ENCODE measurements at regions of chr5 and their contacts with region 1.

Region 1: GRCh38 chr5:151164686-151165392 is 7.3 kb upstream of the ANXA6 start:
- DNase-seq: peak; percentile 74
- H3K4me3 ChIP-seq: no peak overlapping the region
- H3K27ac ChIP-seq: no peak overlapping the region
- H3K4me1 ChIP-seq: no peaks in the 10 kb centered on the region
- H3K27me3 ChIP-seq: no peaks in the 10 kb centered on the region
- CTCF ChIP-seq: peak; percentile 71 to 91 (median 87)
- POLR2A ChIP-seq: no peak

Region 2: DNA sequence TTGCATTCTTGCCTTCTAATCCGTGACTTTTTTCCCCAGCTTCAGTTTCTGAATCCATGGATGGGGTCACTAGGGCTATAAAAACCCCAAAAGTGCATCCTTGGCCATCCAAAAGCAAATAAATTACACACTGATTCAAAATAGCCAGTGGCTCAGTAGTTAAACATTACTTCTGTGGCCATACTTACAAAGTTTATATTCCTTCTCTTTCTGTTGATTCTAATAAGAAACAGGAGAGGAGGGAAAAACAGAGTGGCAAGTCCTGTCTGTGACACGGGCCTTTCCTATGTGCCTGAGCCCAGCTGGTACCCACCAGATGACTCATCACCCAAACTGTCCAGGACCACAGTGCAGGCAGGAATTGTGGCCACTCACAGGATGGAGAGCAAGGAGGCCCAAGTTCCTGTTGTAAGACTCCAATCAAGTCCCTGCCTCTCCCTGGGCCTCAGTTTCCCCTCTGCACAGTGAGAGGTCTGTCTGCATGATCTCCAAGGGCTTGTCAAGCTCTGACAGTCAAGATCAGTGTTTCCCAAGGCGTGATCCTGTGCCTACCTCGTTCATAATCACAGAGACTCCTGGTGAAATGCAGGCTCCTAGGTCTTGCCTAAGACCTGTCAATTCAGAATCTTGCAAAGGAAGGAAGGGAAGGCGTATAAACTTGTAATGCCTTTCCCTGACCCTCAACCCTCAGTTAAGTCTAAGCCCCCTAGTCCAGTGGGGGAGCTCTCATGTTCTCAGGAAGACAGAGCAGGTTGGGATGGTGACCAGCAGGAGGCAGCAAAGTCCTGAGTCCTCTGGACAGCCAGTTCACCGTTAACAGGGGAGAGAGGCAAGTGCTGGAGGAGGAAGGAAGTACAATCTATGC is 113.5 kb before region 1 on chr5:
- intact Hi-C with region 1: loop called (anchors 5 kb)
- DNase-seq: peak; percentile 68
- H3K4me3 ChIP-seq: no peak overlapping the region
- H3K27ac ChIP-seq: no peak overlapping the region
- H3K4me1 ChIP-seq: no peaks in the 10 kb centered on the region
- H3K27me3 ChIP-seq: no peaks in the 10 kb centered on the region
- CTCF ChIP-seq: peak; percentile 54 to 88 (median 79)
- POLR2A ChIP-seq: no peak

Region 3: DNA sequence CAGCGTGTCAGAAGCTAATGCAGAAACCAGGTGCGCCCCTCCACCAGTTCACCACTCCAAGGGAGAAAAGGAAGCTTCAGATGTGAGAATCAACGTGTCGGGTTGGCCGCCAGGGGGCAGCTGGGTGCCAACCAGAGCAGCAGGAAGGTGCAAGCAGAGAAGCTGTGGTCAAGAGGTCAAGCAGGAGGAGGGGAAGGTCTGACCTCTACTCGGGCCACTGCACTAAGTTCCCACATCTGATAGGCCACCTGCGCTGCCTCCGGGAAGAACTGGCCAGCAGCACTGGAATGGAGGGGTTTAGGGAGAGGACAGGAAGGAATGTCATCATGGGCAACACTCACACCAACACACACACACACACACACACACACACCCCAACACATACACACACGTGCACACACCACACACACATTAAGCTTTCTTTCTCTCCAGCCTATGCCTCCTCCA is 38.6 kb before region 1 on chr5:
- intact Hi-C with region 1: loop called (anchors 2 kb)
- DNase-seq: peak; percentile 52
- H3K4me3 ChIP-seq: no peak overlapping the region
- H3K27ac ChIP-seq: no peak overlapping the region
- H3K4me1 ChIP-seq: no peaks in the 10 kb centered on the region
- H3K27me3 ChIP-seq: no peaks in the 10 kb centered on the region
- CTCF ChIP-seq: peak; percentile 42 to 87 (median 79)
- POLR2A ChIP-seq: no peak